ENCODE measurements at regions of chr3 and their contacts with region 1.

Region 1: GRCh38 chr3:51982782-51983577 is at the start of gene ACY1:
- DNase-seq: peak; percentile 97
- H3K4me3 ChIP-seq: peak within 1 kb of the TSS; percentile 68 to 90
- H3K27ac ChIP-seq: peak within 1 kb of the TSS; percentile 89 to 93
- H3K4me1 ChIP-seq: peaks cover 5 to 19% of the 10 kb centered on the region in 2 experiments; a peak in 3 of 4 replicates
- H3K27me3 ChIP-seq: no peaks in the 10 kb centered on the region
- CTCF ChIP-seq: peak; percentile 4; the same call in 1 of the 2 replicates
- EP300 ChIP-seq: no peak
- RAD21 ChIP-seq: no peak
- polyA plus RNA-seq, gene ACY1: 93.0 and 96.2 TPM in 2 replicates

Region 2: DNA sequence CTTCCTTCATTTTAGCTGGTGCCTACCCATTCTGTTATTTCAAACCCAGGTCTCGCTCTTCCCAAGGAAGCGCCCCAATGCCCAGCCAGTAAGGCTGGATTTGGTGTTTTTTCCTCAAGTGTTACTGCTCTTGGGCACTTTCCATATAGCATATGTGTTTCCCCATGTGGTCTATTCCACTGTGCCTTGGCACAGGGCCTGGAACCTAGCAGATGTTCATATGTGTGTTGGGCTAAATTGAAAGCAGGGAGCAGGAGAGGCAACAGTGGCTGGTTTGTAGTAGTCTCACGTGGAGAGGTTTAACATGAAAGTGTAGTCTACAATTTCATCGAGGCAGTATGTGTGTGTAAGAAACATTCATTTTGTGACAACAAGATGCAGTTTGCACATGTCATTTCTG is 360.1 kb before region 1 on chr3:
- CTCF ChIA-PET with region 1: no interaction called
- POLR2A ChIA-PET with region 1: no interaction called
- DNase-seq: peak; percentile 39
- H3K4me3 ChIP-seq: no peak overlapping the region
- H3K27ac ChIP-seq: no peak overlapping the region
- H3K4me1 ChIP-seq: peaks cover 0 to 8% of the 10 kb centered on the region in 2 experiments; a peak in 1 of 4 replicates
- H3K27me3 ChIP-seq: no peaks in the 10 kb centered on the region
- CTCF ChIP-seq: no peak
- EP300 ChIP-seq: no peak
- RAD21 ChIP-seq: no peak

Region 3: DNA sequence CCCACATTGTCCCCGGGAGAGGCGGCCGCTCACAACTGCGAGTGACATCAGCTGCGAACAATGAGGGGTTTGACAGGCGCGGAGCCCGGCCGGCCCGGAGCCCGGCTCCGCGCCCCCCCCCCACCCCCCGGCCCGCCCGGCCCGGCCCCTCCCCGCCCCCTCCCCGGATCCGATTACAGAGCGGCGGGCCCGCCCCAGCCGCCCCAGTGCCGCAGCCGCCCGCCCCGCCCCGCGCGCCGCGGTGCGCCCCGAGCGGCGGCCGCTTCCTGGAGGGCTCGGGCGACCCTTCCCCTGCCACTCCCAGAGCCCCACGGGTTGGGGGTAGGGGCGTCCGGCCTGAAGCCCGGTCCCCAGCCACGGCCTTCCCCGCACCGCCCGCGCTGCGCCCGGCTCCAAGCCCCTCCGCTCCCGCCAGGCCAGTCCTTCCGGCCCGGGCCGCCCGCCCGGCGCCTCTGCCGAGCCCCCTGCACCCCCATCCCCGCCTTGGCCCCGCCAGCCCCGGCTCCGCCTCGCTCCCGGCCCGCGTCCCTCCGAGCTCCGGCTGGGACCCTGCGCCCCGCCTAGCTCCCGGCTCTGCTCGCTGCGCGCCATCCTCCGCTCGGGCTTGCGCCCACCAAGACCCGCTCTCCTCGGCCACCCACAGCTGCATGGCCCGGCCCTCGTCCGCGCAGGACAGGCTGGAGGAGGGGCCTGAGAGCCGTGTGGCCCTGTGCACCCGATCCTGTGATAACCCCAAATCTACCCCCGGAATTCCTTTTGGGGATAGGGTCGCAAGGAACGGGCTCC is 15.4 kb before region 1 on chr3 and contains the start of gene PCBP4:
- CTCF ChIA-PET with region 1: interaction called, 27 read pairs
- POLR2A ChIA-PET with region 1: interaction called, 20 read pairs
- DNase-seq: peak; percentile 88
- H3K4me3 ChIP-seq: peak within 1 kb of the TSS; percentile 76 to 79
- H3K27ac ChIP-seq: peak within 1 kb of the TSS; percentile 54 to 97
- H3K4me1 ChIP-seq: peaks cover 4 to 67% of the 10 kb centered on the region in 2 experiments; a peak in 2 of 4 replicates
- H3K27me3 ChIP-seq: no peaks in the 10 kb centered on the region
- CTCF ChIP-seq: no peak
- EP300 ChIP-seq: no peak
- RAD21 ChIP-seq: no peak
- polyA plus RNA-seq, gene PCBP4: 97.4 and 118 TPM in 2 replicates

Measured in SK-N-SH (cell line).